ENCODE measurements at regions of chr1 and their contacts with region 1.

Region 1: GRCh38 chr1:170765712-170766330 is 101.9 kb downstream of the PRRX1 start:
- DNase-seq: no peak
- H3K4me3 ChIP-seq: no peak overlapping the region
- H3K4me3 Mint-ChIP-seq: no peak overlapping the region
- H3K27ac Mint-ChIP-seq: no peak overlapping the region
- H3K4me1 ChIP-seq: no peaks in the 10 kb centered on the region
- H3K4me1 Mint-ChIP-seq: no peaks in the 10 kb centered on the region
- H3K27me3 ChIP-seq: no peaks in the 10 kb centered on the region
- H3K27me3 Mint-ChIP-seq: peaks cover 3% of the 10 kb centered on the region
- CTCF ChIP-seq: peak in 1 of 2 experiments; percentile 42

Region 2: GRCh38 chr1:170669107-170669445 is 96.7 kb before region 1 on chr1:
- CTCF ChIA-PET with region 1: interaction called, 10 read pairs
- POLR2A ChIA-PET with region 1: no interaction called
- intact Hi-C with region 1: no loop called
- DNase-seq: no peak
- H3K4me3 ChIP-seq: no peak overlapping the region
- H3K4me3 Mint-ChIP-seq: no peak overlapping the region
- H3K27ac Mint-ChIP-seq: no peak overlapping the region
- H3K4me1 ChIP-seq: no peaks in the 10 kb centered on the region
- H3K4me1 Mint-ChIP-seq: no peaks in the 10 kb centered on the region
- H3K27me3 ChIP-seq: no peaks in the 10 kb centered on the region; the same call in none of the 2 replicates
- H3K27me3 Mint-ChIP-seq: peaks cover 31% of the 10 kb centered on the region
- CTCF ChIP-seq: no peak

Region 3: GRCh38 chr1:170687621-170688020 is 78.2 kb before region 1 on chr1:
- CTCF ChIA-PET with region 1: no interaction called
- POLR2A ChIA-PET with region 1: no interaction called
- intact Hi-C with region 1: loop called (anchors 2 kb)
- DNase-seq: no peak
- H3K4me3 ChIP-seq: no peak overlapping the region
- H3K4me3 Mint-ChIP-seq: no peak overlapping the region
- H3K27ac Mint-ChIP-seq: no peak overlapping the region
- H3K4me1 ChIP-seq: 0 out of 2 replicates have a peak, but pooled peaks cover 4% of the 10 kb centered on the region
- H3K4me1 Mint-ChIP-seq: peaks cover 5% of the 10 kb centered on the region
- H3K27me3 ChIP-seq: no peaks in the 10 kb centered on the region; the same call in 1 of the 2 replicates
- H3K27me3 Mint-ChIP-seq: peaks cover 11% of the 10 kb centered on the region
- CTCF ChIP-seq: no peak

Region 4: GRCh38 chr1:170881268-170882265 is 115.7 kb after region 1 on chr1:
- CTCF ChIA-PET with region 1: no interaction called
- POLR2A ChIA-PET with region 1: no interaction called
- intact Hi-C with region 1: loop called (anchors 5 kb)
- DNase-seq: peak in 1 of 2 experiments; percentile 13
- H3K4me3 ChIP-seq: no peak overlapping the region
- H3K4me3 Mint-ChIP-seq: no peak overlapping the region
- H3K27ac Mint-ChIP-seq: no peak overlapping the region
- H3K4me1 ChIP-seq: peaks cover 8% of the 10 kb centered on the region
- H3K4me1 Mint-ChIP-seq: no peaks in the 10 kb centered on the region
- H3K27me3 ChIP-seq: no peaks in the 10 kb centered on the region
- H3K27me3 Mint-ChIP-seq: peaks cover 2% of the 10 kb centered on the region
- CTCF ChIP-seq: peak; percentile 30 to 36

Region 5: GRCh38 chr1:170929835-170930554 is 164.2 kb after region 1 on chr1:
- CTCF ChIA-PET with region 1: no interaction called
- POLR2A ChIA-PET with region 1: no interaction called
- intact Hi-C with region 1: loop called (anchors 1 kb)
- DNase-seq: peak in 1 of 2 experiments; percentile 50
- H3K4me3 ChIP-seq: no peak overlapping the region
- H3K4me3 Mint-ChIP-seq: no peak overlapping the region
- H3K27ac Mint-ChIP-seq: no peak overlapping the region
- H3K4me1 ChIP-seq: no peaks in the 10 kb centered on the region
- H3K4me1 Mint-ChIP-seq: no peaks in the 10 kb centered on the region
- H3K27me3 ChIP-seq: no peaks in the 10 kb centered on the region
- H3K27me3 Mint-ChIP-seq: no peaks in the 10 kb centered on the region
- CTCF ChIP-seq: peak; percentile 55 to 74

Measured in Caco-2 (cell line).